ENCODE measurements at regions of chr3 and their contacts with region 1.

Region 1: GRCh38 chr3:14203521-14204079 is 25.0 kb downstream of the LSM3 start:
- DNase-seq: peak; percentile 76
- CTCF ChIP-seq: peak; percentile 82

Region 2: GRCh38 chr3:14064910-14065309 is 138.7 kb before region 1 on chr3:
- CTCF ChIA-PET with region 1: no interaction called
- POLR2A ChIA-PET with region 1: no interaction called
- DNase-seq: no peak
- CTCF ChIP-seq: no peak

Region 3: DNA sequence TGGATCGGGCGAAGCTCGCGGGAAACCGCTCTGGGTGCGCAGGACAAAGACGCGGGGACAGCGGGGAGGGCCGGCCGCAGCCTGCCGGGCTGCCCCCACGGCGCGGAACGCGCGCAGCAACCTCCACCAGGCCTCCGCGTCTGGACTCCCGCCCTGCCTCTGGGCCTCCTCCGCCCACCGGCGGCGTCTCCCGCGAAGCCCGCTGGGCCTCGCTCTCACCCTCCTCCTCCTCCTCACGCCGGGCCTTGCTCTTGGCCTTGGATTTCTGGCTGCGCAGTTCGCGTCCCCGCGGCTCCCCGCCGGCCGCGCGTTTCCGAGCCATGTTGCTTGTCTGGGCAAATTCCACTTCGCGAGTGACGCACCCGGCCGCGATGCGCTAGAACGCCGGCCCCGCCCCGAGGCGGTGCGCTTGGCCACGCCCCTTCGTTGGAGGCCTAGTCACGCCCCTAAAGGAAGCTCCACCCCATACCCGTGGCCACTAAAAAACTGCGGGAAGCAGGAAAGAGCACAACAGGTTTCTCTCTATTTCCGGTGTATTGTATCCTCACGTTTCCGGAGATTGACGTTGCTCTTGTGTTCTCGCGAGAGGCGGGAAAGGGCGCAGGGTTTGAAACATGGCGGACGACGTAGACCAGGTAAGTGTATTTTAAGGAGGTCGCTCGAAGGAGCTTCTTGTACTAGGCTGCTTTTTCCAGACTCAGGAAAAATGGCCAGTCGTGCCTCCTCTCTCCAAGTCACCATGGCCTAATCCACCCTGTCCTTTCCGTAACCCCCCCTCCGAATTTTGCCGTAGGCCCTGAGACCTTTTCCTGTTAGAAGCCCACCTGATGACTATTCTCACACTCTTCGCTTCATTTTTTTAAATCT is 25.1 kb before region 1 on chr3 and contains the starts of genes LSM3 and XPC:
- CTCF ChIA-PET with region 1: interaction called, 17 read pairs
- POLR2A ChIA-PET with region 1: interaction called, 4 read pairs
- DNase-seq: peak; percentile 94
- CTCF ChIP-seq: no peak

Region 4: GRCh38 chr3:14216257-14217048 is 12.9 kb after region 1 on chr3:
- CTCF ChIA-PET with region 1: interaction called, 60 read pairs
- POLR2A ChIA-PET with region 1: no interaction called
- DNase-seq: no peak
- CTCF ChIP-seq: no peak

Region 5: DNA sequence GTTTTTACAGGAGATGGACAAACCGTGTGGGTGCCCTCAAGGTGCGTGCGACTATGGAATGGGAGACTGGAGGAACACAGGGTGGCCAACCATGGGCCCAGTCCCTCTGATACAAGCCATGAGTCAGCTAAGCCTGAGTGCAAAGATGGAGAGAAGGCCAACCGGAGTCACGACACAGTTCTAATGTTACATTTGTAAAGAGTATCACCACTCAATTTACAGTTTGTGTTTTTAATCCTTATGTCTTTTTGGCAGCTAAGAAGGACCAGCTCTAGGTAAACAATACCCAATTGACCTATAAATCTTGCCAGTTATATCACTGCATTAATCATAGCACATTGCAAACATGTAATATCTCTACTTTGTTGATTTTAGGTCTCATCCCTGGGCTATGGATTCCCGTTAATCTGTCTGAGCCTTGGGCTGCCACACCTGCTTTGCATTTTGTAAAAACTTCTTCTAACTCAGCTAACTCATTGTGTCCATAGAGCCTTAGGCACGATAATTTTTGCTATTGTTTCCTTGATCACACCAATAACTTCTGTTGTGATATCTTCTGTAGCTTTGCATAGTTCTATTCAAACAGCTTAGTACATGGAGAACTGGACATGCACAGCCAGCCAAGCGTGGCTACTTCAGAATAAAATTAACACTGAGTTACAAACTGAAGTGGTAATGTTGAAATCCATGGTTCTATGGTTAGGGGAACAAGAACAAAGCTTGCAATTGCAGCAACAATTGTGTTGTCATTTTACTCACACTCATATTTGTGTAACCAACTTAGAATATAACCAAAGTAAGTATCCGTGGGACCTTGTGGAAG is 25.3 kb after region 1 on chr3:
- CTCF ChIA-PET with region 1: interaction called, 18 read pairs
- POLR2A ChIA-PET with region 1: no interaction called
- DNase-seq: no peak
- CTCF ChIP-seq: no peak

Region 6: DNA sequence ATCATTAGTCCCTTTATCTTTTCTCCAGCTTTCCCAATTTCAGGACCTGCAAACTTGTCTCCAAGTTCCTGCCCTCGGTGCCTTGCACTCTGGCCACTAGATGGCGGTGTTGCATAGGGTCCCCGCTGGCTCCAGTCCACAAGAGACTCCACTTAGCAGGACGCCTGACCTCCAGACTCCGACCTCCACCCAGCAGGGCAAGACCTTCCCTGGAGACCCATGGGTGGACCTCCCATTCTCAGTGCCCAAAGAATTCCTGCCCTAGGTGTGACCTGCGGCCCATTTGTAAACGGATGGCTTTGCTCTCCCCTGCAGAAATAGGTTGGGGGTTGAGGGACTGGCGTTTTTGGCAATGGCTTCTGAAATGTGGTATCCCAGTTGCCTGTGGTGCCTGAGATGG is 57.6 kb after region 1 on chr3:
- CTCF ChIA-PET with region 1: interaction called, 12 read pairs
- POLR2A ChIA-PET with region 1: no interaction called
- DNase-seq: peak; percentile 85
- CTCF ChIP-seq: peak; percentile 99

Region 7: GRCh38 chr3:14278799-14279625 is 75.4 kb after region 1 on chr3:
- CTCF ChIA-PET with region 1: no interaction called
- POLR2A ChIA-PET with region 1: no interaction called
- DNase-seq: no peak
- CTCF ChIP-seq: no peak

Region 8: GRCh38 chr3:14467814-14468620 is 264.4 kb after region 1 on chr3:
- CTCF ChIA-PET with region 1: interaction called, 51 read pairs
- POLR2A ChIA-PET with region 1: no interaction called
- DNase-seq: peak; percentile 81
- CTCF ChIP-seq: peak; percentile 83

Region 9: DNA sequence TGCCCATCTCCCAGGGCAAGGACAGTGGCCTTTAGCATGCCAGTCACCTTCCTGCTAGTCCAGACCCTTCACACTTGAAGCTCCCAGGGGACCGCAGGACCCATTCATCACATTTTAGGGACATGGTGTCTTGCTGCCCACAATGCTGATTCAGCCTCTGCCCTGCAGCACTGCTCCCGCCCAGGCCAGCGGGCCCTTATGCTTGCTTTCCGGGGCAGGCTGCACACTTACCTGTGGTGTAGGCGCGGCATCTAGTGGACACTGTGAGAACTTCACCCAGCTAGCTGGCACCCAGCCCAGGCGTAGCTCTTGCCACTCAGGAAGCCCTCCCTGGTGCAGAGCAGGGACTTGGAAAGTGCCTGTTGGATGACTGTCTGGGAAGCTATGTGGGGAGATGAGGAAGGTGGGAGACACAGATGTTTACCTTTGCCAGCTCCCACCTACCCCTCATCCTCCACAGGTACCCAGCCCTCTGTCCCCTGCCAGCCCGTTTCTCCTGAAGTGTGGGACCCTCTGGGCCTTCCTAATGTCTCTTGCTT is 717.5 kb after region 1 on chr3:
- CTCF ChIA-PET with region 1: interaction called, 26 read pairs
- POLR2A ChIA-PET with region 1: no interaction called
- DNase-seq: peak; percentile 83
- CTCF ChIP-seq: peak; percentile 88

Measured in GM10248 (cell line).